Dendritic cell treated with granulocyte-macrophage colony-stimulating factor and Interleukin-4, amounts not matched to agents 40 ng/mL and 50 ng/mL, for 4 days (primary cell): ENCODE measurements at regions of chr16 and their contacts with region 1.

Region 1: GRCh38 chr16:711548-712320 is 3.2 kb upstream of the METRN start:
- H3K4me3 Mint-ChIP-seq: no peak overlapping the region
- H3K27ac Mint-ChIP-seq: no peak overlapping the region
- H3K4me1 Mint-ChIP-seq: peaks cover 25% of the 10 kb centered on the region
- H3K27me3 Mint-ChIP-seq: peaks cover 82% of the 10 kb centered on the region

Region 2: DNA sequence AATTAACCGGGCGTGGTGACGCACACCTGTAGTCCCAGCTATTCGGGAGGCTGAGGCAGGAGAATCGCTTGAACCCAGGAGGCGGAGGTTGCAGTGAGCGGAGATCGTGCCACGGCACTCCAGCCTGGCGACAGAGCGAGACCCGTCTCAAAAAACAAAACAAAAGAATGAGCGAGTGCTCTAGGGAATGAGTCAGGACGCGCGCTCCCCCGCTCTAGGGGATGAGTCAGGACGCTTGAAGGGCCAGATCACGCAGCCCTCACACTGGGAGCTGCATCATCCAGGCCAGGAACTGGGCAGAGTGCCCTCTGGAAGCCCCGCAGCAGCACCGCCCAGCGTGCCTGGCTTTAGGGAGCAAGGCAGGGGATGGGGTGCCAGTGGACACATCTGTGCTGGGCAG is 84.9 kb before region 1 on chr16:
- intact Hi-C with region 1: no loop called
- H3K4me3 Mint-ChIP-seq: no peak overlapping the region
- H3K27ac Mint-ChIP-seq: no peak overlapping the region
- H3K4me1 Mint-ChIP-seq: peaks cover 4% of the 10 kb centered on the region
- H3K27me3 Mint-ChIP-seq: peaks cover 7% of the 10 kb centered on the region

Region 3: DNA sequence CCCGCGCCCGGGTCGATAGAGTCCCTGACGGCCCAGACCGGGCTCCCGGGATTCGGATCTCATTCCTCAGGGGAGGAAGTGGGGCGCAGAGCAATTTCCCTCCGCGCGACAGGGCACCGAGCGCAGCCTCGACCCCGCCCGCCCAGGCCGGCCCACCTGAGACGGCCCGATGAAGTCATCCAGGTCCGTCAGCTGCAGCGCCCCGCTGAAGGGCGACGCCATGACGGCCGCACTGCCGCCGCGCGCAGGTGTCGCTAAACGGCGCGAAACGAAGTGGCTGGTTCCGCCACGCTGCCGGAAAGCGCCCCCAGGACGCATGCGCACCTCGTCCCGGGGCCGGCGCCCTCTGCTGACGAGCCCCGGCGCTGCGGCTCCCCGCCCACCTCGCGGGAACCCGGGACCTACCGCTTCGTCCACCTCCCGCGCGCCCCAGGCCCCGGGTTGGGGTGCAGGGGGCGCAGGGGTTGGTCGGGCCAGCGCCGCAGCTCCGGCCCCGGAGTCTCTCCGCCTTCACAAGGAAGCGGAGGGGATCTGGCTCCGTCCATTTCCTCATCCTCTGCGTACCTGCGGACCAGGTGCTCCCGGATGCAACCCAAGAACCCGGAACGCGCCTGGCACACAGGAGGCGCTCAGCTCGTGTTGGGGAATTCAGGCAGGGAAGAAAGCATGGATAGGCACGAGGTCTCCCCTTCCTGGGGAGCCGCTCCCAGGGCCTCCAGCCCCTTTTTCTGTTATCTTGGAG is 29.2 kb after region 1 on chr16 and contains the start of gene CIAO3:
- intact Hi-C with region 1: loop called (anchors 1 kb)
- H3K4me3 Mint-ChIP-seq: peak within 1 kb of the TSS; percentile 80
- H3K27ac Mint-ChIP-seq: peak within 1 kb of the TSS; percentile 77
- H3K4me1 Mint-ChIP-seq: peaks cover 17% of the 10 kb centered on the region
- H3K27me3 Mint-ChIP-seq: no peaks in the 10 kb centered on the region

Region 4: GRCh38 chr16:754656-755055 is 42.9 kb after region 1 on chr16:
- intact Hi-C with region 1: no loop called
- H3K4me3 Mint-ChIP-seq: peak overlapping the region; percentile 17
- H3K27ac Mint-ChIP-seq: peak overlapping the region; percentile 45
- H3K4me1 Mint-ChIP-seq: peaks cover 37% of the 10 kb centered on the region
- H3K27me3 Mint-ChIP-seq: peaks cover 6% of the 10 kb centered on the region

Region 5: GRCh38 chr16:785563-786535 is 74.1 kb after region 1 on chr16:
- intact Hi-C with region 1: loop called (anchors 1 kb)
- H3K4me3 Mint-ChIP-seq: no peak overlapping the region
- H3K27ac Mint-ChIP-seq: no peak overlapping the region
- H3K4me1 Mint-ChIP-seq: peaks cover 18% of the 10 kb centered on the region
- H3K27me3 Mint-ChIP-seq: peaks cover 9% of the 10 kb centered on the region

Region 6: GRCh38 chr16:1188432-1189189 is 476.9 kb after region 1 on chr16:
- intact Hi-C with region 1: loop called (anchors 10 kb)
- H3K4me3 Mint-ChIP-seq: no peak overlapping the region
- H3K27ac Mint-ChIP-seq: no peak overlapping the region
- H3K4me1 Mint-ChIP-seq: no peaks in the 10 kb centered on the region
- H3K27me3 Mint-ChIP-seq: peaks cover 4% of the 10 kb centered on the region